Activated CD4-positive, alpha-beta memory T cell treated with anti-CD3 and anti-CD28 coated beads for 36 hours (primary cell): ENCODE measurements at regions of chr6 and their contacts with region 1.

Region 1: GRCh38 chr6:41424370-41425058 is 89.1 kb downstream of the NCR2 start:
- DNase-seq: peak; percentile 86
- H3K4me3 Mint-ChIP-seq: no peak overlapping the region
- H3K27ac Mint-ChIP-seq: no peak overlapping the region
- H3K4me1 Mint-ChIP-seq: peaks cover 9% of the 10 kb centered on the region
- H3K27me3 Mint-ChIP-seq: peaks cover 17% of the 10 kb centered on the region

Region 2: GRCh38 chr6:41367700-41368099 is 56.8 kb before region 1 on chr6:
- CTCF ChIA-PET with region 1: interaction called, 6 read pairs
- POLR2A ChIA-PET with region 1: no interaction called
- intact Hi-C with region 1: loop called (anchors 2 kb)
- DNase-seq: peak; percentile 25
- H3K4me3 Mint-ChIP-seq: no peak overlapping the region
- H3K27ac Mint-ChIP-seq: no peak overlapping the region
- H3K4me1 Mint-ChIP-seq: peaks cover 15% of the 10 kb centered on the region
- H3K27me3 Mint-ChIP-seq: peaks cover 49% of the 10 kb centered on the region

Region 3: GRCh38 chr6:41442800-41443501 is 18.4 kb after region 1 on chr6:
- CTCF ChIA-PET with region 1: interaction called, 26 read pairs
- POLR2A ChIA-PET with region 1: no interaction called
- intact Hi-C with region 1: no loop called
- DNase-seq: peak; percentile 38
- H3K4me3 Mint-ChIP-seq: no peak overlapping the region
- H3K27ac Mint-ChIP-seq: no peak overlapping the region
- H3K4me1 Mint-ChIP-seq: peaks cover 35% of the 10 kb centered on the region
- H3K27me3 Mint-ChIP-seq: peaks cover 8% of the 10 kb centered on the region

Region 4: GRCh38 chr6:41545703-41546474 is 121.4 kb after region 1 on chr6 and contains the start of gene FOXP4:
- CTCF ChIA-PET with region 1: interaction called, 8 read pairs
- POLR2A ChIA-PET with region 1: no interaction called
- intact Hi-C with region 1: loop called (anchors 2 kb)
- DNase-seq: peak; percentile 90
- H3K4me3 Mint-ChIP-seq: peak within 1 kb of the TSS; percentile 94
- H3K27ac Mint-ChIP-seq: peak within 1 kb of the TSS; percentile 85
- H3K4me1 Mint-ChIP-seq: peaks cover 28% of the 10 kb centered on the region
- H3K27me3 Mint-ChIP-seq: peaks cover 2% of the 10 kb centered on the region
- total RNA-seq, gene FOXP4: 19.5 to 21.6 TPM

Region 5: DNA sequence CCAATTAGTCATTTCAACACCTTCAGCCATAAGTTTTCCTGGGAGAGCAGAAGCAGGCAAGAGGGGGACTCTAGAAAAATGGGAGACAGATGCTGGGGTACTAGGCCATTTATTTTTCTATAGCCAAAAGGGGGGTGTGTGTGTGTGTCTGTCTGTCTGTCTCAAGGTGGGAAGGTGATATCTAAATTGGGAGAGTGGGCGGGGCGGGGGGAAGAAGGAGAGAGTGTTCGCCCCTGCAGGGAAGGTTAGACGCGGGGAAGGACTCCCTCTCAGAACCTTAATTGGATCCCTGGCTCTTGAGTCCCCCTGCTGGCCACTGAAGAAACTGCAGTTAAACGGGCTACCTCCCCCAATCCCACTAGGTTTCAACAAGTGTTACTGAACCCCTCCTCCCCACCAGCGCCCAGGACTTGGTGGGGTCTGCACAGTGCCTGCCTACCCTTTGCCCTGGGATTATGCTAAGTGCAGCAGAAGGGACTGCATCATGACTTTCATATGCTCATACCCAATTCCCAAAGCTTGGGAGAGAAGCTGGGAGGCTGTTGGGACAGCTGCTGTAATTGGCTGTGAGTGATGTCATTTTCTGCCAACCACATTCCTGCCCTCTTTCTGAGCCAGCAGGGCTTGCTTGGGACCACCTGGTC is 167.5 kb after region 1 on chr6:
- CTCF ChIA-PET with region 1: interaction called, 59 read pairs
- POLR2A ChIA-PET with region 1: no interaction called
- intact Hi-C with region 1: loop called (anchors 1 kb)
- DNase-seq: peak; percentile 86
- H3K4me3 Mint-ChIP-seq: no peak overlapping the region
- H3K27ac Mint-ChIP-seq: no peak overlapping the region
- H3K4me1 Mint-ChIP-seq: no peaks in the 10 kb centered on the region
- H3K27me3 Mint-ChIP-seq: no peaks in the 10 kb centered on the region

Region 6: DNA sequence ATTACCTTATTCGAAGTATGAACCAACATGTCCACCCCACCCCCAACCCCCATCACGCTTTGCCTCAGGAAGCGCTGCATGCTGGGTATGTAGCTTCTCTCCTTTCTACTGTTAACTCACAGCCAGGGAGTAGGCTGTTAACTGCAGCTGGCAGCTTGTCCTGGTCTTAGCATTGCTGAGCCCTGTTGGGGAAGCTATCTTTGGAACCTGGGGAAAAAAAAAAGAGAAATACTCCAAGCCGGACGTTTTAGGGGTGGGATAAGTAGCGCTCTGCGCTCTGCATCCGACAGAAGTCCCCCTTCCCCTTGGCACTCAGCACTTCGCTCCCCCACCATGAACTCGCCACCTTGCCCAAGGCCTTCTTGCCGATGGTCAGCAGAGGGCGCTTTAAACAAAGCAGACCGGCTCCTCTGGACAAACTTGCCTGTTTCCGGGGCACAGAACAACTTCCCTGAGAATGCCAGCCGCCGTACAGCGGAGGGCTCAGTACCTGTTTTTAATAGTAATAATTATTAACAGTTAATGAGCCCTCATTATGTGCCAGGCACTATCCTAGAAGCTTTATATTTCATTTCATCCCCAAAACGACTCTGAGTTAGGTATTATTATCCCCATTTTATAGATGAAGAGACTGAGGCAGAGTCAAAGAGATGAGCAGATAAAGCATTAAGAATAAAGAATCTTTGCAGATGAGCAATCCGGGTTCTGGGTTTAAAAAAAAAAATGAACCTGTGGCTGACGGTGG is 178.5 kb after region 1 on chr6:
- CTCF ChIA-PET with region 1: interaction called, 11 read pairs
- POLR2A ChIA-PET with region 1: no interaction called
- intact Hi-C with region 1: no loop called
- DNase-seq: peak; percentile 82
- H3K4me3 Mint-ChIP-seq: peak overlapping the region; percentile 8
- H3K27ac Mint-ChIP-seq: no peak overlapping the region
- H3K4me1 Mint-ChIP-seq: peaks cover 4% of the 10 kb centered on the region
- H3K27me3 Mint-ChIP-seq: peaks cover 1% of the 10 kb centered on the region

Region 7: DNA sequence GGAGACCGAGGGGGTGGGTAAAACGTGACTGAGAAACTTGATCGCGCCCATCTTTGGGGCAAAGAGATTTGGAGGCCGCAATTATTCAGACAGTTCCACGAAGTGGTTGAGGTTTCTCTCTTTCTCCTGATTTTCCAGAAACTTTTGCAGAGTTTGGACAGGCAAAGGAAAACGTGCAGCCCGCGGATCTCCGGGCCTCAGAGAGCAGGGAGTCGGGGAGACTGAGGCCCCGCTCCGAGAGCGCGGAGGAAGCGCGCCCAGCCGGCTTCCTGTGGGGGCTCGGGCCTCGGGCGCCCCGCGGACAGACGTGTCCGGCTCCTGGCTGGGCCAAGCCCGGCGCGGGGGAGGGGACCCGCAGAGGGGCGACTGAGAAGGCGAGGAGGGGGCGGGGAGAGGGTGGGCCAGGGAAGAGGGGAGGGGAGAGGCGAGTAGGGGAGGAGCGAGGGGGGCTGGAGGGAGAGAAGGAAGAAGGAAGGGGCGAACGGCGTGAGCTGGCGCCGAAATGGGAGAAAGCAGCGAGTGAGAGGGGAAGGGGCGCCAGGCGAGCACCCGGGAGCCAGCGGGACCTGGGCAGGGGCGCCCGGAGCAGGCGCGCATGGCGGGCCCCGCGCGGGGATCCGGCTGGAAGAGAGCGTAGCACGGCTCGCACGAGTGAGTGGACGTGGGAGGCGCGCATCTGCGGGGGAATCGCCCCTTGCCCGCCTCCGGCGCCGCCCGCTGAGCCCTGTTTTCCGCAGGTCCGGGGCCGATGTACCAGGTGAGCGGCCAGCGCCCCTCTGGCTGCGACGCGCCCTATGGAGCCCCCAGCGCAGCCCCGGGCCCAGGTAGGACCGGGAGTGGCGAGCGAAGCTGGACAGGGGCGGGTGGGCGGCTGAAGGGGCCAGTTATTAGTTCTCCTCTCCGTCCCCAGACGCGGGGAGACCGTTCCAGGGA is 213.8 kb after region 1 on chr6 and contains the start of gene MDFI:
- CTCF ChIA-PET with region 1: no interaction called
- POLR2A ChIA-PET with region 1: no interaction called
- intact Hi-C with region 1: no loop called
- DNase-seq: no peak
- H3K4me3 Mint-ChIP-seq: peak within 1 kb of the TSS; percentile 54
- H3K27ac Mint-ChIP-seq: no peak within 1 kb of the TSS
- H3K4me1 Mint-ChIP-seq: peaks cover 5% of the 10 kb centered on the region
- H3K27me3 Mint-ChIP-seq: peaks cover 48% of the 10 kb centered on the region
- total RNA-seq, gene MDFI: not detected